MCF 10A (cell line): ENCODE measurements at regions of chr14 and their contacts with region 1.

Region 1: GRCh38 chr14:45406942-45407341 is 153.9 kb upstream of the MIS18BP1 start:
- DNase-seq: no peak
- H3K4me3 Mint-ChIP-seq: no peak overlapping the region
- H3K27ac Mint-ChIP-seq: no peak overlapping the region
- H3K4me1 Mint-ChIP-seq: no peaks in the 10 kb centered on the region
- H3K27me3 Mint-ChIP-seq: no peaks in the 10 kb centered on the region
- CTCF ChIP-seq: no peak

Region 2: DNA sequence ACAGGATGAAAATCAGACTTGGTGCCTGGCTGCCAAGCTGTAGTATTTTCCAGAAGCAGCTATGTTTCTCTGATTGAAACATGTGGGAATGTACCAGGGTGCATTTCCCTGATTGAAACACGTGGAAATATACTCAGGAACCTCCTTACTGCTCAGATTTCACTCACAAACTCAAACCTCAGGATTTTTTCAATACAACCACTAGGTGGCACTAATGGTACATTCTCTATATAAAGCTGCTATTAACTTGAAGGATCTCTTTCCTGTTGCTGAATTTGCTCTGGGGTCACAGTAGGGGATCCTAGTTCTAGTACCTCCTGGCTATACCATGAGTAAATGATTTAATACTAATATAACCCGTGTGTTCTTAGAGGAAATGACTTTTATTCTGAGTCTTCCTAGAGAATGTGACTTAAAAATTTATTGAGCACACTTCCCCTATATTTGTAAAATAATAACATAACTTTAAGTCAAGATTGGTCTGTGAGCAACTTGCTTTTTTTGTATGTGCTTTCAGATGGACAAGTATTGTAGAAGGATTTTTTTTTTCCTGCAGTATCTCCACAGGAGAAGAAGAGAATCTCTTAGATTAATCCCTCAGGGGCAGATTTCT is 19.8 kb after region 1 on chr14:
- CTCF ChIA-PET with region 1: interaction called, 11 read pairs
- POLR2A ChIA-PET with region 1: no interaction called
- intact Hi-C with region 1: no loop called
- DNase-seq: peak; percentile 64
- H3K4me3 Mint-ChIP-seq: no peak overlapping the region
- H3K27ac Mint-ChIP-seq: no peak overlapping the region
- H3K4me1 Mint-ChIP-seq: no peaks in the 10 kb centered on the region
- H3K27me3 Mint-ChIP-seq: no peaks in the 10 kb centered on the region
- CTCF ChIP-seq: peak; percentile 57

Region 3: DNA sequence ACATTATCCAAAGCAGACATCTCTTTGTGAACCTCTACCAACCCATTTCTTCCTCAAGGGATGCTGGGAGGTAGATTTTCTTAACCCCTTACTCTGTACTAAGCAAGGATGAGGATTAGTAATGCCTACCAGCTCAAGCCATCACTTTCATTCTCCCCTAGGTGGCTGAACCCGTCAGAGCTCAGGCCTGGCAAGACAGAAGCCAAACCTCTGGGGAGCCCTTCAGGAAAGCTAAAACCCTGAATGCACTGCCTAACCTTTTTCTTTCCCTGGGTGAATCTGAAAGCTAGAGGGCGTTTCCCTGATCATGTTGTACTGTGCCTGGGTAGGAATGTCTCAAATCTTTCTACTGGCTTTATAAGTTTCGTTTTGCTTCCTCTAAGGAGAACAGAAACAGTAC is 627.4 kb after region 1 on chr14:
- CTCF ChIA-PET with region 1: no interaction called
- POLR2A ChIA-PET with region 1: no interaction called
- intact Hi-C with region 1: no loop called
- DNase-seq: no peak
- H3K4me3 Mint-ChIP-seq: no peak overlapping the region
- H3K27ac Mint-ChIP-seq: no peak overlapping the region
- H3K4me1 Mint-ChIP-seq: no peaks in the 10 kb centered on the region
- H3K27me3 Mint-ChIP-seq: peaks cover 10% of the 10 kb centered on the region
- CTCF ChIP-seq: no peak